Common myeloid progenitor, CD34-positive (primary cell): ENCODE measurements at regions of chr3 and their contacts with region 1.

Region 1: DNA sequence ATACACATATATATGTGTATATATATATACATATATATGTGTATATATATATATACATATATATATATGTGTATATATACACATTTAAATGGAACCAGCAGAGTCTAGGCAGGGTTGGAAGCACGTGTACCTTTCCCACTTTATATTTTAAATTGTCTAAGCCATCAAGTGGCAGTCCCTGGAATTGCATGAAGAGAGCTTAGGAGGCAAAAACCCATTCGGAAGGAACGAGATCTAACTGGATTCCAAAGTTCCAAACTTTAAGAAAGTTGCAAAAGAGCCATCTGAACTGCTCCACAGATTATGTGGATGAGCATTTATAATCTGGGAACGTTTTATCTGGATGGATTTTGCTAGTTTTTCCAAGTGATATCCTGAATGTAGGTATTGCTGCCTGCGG is 186.5 kb downstream of the FOXP1 start:
- DNase-seq: peak; percentile 46 to 58 (median 53)
- H3K4me3 ChIP-seq: no peak overlapping the region
- H3K27ac ChIP-seq: no peak overlapping the region
- H3K4me1 ChIP-seq: peaks cover 29 to 82% (median 52%) of the 10 kb centered on the region in 4 experiments
- H3K27me3 ChIP-seq: no peaks in the 10 kb centered on the region

Region 2: GRCh38 chr3:71384837-71385716 is 12.0 kb before region 1 on chr3:
- CTCF ChIA-PET with region 1: interaction called, 12 read pairs
- POLR2A ChIA-PET with region 1: no interaction called
- DNase-seq: peak in 2 of 3 donors; percentile 52 to 65
- H3K4me3 ChIP-seq: peak overlapping the region in 4 of 7 experiments; percentile 5 to 47 (median 36)
- H3K27ac ChIP-seq: peak overlapping the region in 1 of 2 experiments; percentile 59
- H3K4me1 ChIP-seq: peaks cover 41 to 70% (median 54%) of the 10 kb centered on the region in 4 experiments
- H3K27me3 ChIP-seq: no peaks in the 10 kb centered on the region